ENCODE measurements at regions of chr10 and their contacts with region 1.

Region 1: GRCh38 chr10:6050801-6051445 is 11.2 kb downstream of the IL2RA start:
- DNase-seq: peak; percentile 99
- H3K4me3 Mint-ChIP-seq: peak overlapping the region; percentile 80
- H3K27ac Mint-ChIP-seq: peak overlapping the region; percentile 98
- H3K4me1 Mint-ChIP-seq: peaks cover 85% of the 10 kb centered on the region
- H3K27me3 Mint-ChIP-seq: no peaks in the 10 kb centered on the region

Region 2: GRCh38 chr10:5446390-5446926 is 604.5 kb before region 1 on chr10:
- CTCF ChIA-PET with region 1: no interaction called
- intact Hi-C with region 1: loop called (anchors 10 kb)
- DNase-seq: peak; percentile 77
- H3K4me3 Mint-ChIP-seq: peak overlapping the region; percentile 61
- H3K27ac Mint-ChIP-seq: peak overlapping the region; percentile 33
- H3K4me1 Mint-ChIP-seq: peaks cover 48% of the 10 kb centered on the region
- H3K27me3 Mint-ChIP-seq: no peaks in the 10 kb centered on the region

Region 3: GRCh38 chr10:6014241-6014761 is 36.6 kb before region 1 on chr10:
- CTCF ChIA-PET with region 1: interaction called, 10 read pairs
- intact Hi-C with region 1: loop called (anchors 1 kb)
- DNase-seq: peak; percentile 83
- H3K4me3 Mint-ChIP-seq: no peak overlapping the region
- H3K27ac Mint-ChIP-seq: peak overlapping the region; percentile 91
- H3K4me1 Mint-ChIP-seq: peaks cover 61% of the 10 kb centered on the region
- H3K27me3 Mint-ChIP-seq: no peaks in the 10 kb centered on the region

Region 4: GRCh38 chr10:6083523-6084475 is 32.9 kb after region 1 on chr10:
- CTCF ChIA-PET with region 1: interaction called, 77 read pairs
- intact Hi-C with region 1: loop called (anchors 1 kb)
- DNase-seq: peak; percentile 92
- H3K4me3 Mint-ChIP-seq: peak overlapping the region; percentile 67
- H3K27ac Mint-ChIP-seq: peak overlapping the region; percentile 90
- H3K4me1 Mint-ChIP-seq: peaks cover 61% of the 10 kb centered on the region
- H3K27me3 Mint-ChIP-seq: no peaks in the 10 kb centered on the region

Region 5: DNA sequence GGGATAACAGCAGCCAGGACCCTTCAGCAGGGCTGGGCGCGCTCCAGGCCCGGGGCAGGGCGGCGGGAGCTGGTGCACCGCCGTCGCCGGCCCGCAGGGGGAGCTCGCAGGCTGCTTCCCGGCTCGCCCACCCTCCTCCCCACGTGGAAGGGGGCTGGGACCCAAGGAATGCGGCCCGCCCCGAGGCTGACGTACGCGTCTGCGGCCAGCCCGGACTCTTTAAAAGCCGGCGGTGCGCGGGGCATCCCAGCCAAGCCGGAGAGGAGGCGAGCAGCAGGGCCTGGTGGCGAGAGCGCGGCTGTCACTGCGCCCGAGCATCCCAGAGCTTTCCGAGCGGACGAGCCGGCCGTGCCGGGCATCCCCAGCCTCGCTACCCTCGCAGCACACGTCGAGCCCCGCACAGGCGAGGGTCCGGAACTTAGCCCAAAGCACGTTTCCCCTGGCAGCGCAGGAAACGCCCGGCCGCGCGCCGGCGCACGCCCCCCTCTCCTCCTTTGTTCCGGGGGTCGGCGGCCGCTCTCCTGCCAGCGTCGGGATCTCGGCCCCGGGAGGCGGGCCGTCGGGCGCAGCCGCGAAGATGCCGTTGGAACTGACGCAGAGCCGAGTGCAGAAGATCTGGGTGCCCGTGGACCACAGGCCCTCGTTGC is 151.9 kb after region 1 on chr10 and contains the start of gene PFKFB3:
- CTCF ChIA-PET with region 1: no interaction called
- intact Hi-C with region 1: loop called (anchors 5 kb)
- DNase-seq: peak; percentile 94
- H3K4me3 Mint-ChIP-seq: peak within 1 kb of the TSS; percentile 99
- H3K27ac Mint-ChIP-seq: peak within 1 kb of the TSS; percentile 83
- H3K4me1 Mint-ChIP-seq: peaks cover 36% of the 10 kb centered on the region
- H3K27me3 Mint-ChIP-seq: no peaks in the 10 kb centered on the region
- total RNA-seq, gene PFKFB3: 87.7 to 88.5 TPM

Region 6: DNA sequence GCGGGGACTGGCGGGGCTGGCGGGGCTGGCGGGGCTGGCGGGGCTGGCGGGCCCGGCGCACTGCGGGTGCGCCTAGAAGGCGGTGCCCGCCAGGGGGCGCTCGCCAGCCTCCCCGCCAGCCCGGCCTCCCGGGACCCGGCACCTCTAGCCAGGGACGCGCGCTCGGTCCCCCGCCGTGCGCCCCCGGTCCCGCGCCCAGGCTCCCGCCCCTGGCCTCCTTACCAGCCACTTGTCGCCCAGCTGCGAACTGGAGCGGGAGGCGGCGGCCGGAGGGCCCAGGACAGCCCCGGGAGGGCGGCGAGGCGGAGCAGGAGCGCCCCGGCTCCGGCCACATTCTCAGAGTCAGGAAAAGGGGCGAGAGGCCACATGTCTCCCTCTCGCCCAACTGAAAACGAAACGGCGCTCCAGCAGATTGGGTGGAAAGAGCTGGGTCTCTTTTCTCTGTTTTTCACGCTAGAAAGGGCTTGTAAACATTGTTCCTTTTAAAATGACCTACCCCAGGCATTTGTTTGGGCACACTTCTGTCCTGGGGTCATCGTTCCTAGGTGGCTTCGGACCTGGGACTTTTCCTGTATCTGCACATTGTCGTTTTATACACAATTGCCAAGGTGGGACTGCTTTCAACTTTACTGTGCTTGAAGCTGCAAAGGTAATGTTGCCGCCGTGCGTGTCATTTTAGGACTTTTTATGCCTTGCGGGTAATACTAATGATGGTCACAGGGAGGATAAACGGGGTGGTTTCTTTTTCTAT is 529.5 kb after region 1 on chr10:
- CTCF ChIA-PET with region 1: no interaction called
- intact Hi-C with region 1: loop called (anchors 2 kb)
- DNase-seq: peak; percentile 86
- H3K4me3 Mint-ChIP-seq: peak overlapping the region; percentile 92
- H3K27ac Mint-ChIP-seq: peak overlapping the region; percentile 99
- H3K4me1 Mint-ChIP-seq: peaks cover 39% of the 10 kb centered on the region
- H3K27me3 Mint-ChIP-seq: no peaks in the 10 kb centered on the region